ENCODE measurements at regions of chr14 and their contacts with region 1.

Region 1: DNA sequence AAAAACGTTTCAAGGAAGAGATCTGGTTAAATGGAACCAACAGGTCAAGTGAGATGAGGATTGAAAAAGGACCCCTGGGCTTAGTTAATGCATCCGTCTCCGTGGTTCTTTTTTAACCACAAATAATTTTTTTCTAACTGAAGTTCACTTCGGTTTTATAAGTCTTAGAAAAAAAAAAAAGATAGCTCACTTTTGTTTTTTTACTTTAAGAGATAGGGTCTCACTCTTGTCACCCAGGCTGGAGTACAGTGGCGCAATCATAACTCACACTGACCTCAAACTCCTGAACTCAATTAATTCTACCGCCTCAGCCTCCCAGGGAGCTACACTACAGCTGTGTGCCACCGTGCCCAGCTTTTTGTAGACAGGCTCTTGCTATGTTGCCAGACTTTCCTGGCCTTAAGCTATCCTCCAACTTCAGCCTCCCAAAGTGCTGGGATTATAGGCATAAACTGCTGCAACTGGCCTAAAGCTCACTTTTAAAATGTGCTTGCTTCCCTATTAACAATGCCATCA is 11.8 kb downstream of the HNRNPC start:
- DNase-seq: no peak
- ATAC-seq: no peak
- H3K4me3 Mint-ChIP-seq: peak overlapping the region; percentile 51
- H3K27ac Mint-ChIP-seq: peak overlapping the region; percentile 75
- H3K4me1 Mint-ChIP-seq: peaks cover 65% of the 10 kb centered on the region
- H3K27me3 Mint-ChIP-seq: no peaks in the 10 kb centered on the region
- CTCF ChIP-seq: no peak

Region 2: GRCh38 chr14:21220874-21221477 is 36.5 kb before region 1 on chr14:
- CTCF ChIA-PET with region 1: no interaction called
- POLR2A ChIA-PET with region 1: interaction called, 10 read pairs
- intact Hi-C with region 1: loop called (anchors 5 kb)
- DNase-seq: no peak
- ATAC-seq: no peak
- H3K4me3 Mint-ChIP-seq: no peak overlapping the region
- H3K27ac Mint-ChIP-seq: peak overlapping the region; percentile 76
- H3K4me1 Mint-ChIP-seq: peaks cover 70% of the 10 kb centered on the region
- H3K27me3 Mint-ChIP-seq: no peaks in the 10 kb centered on the region
- CTCF ChIP-seq: no peak

Region 3: GRCh38 chr14:21241218-21241819 is 16.1 kb before region 1 on chr14:
- CTCF ChIA-PET with region 1: interaction called, 56 read pairs
- POLR2A ChIA-PET with region 1: interaction called, 146 read pairs
- intact Hi-C with region 1: no loop called
- DNase-seq: no peak
- ATAC-seq: no peak
- H3K4me3 Mint-ChIP-seq: no peak overlapping the region
- H3K27ac Mint-ChIP-seq: peak overlapping the region; percentile 79
- H3K4me1 Mint-ChIP-seq: peaks cover 76% of the 10 kb centered on the region
- H3K27me3 Mint-ChIP-seq: no peaks in the 10 kb centered on the region
- CTCF ChIP-seq: peak; percentile 62

Measured in activated CD8-positive, alpha-beta T cell treated with anti-CD3 and anti-CD28 coated beads for 36 hours (primary cell).